ENCODE measurements at regions of chr6 and their contacts with region 1.

Region 1: DNA sequence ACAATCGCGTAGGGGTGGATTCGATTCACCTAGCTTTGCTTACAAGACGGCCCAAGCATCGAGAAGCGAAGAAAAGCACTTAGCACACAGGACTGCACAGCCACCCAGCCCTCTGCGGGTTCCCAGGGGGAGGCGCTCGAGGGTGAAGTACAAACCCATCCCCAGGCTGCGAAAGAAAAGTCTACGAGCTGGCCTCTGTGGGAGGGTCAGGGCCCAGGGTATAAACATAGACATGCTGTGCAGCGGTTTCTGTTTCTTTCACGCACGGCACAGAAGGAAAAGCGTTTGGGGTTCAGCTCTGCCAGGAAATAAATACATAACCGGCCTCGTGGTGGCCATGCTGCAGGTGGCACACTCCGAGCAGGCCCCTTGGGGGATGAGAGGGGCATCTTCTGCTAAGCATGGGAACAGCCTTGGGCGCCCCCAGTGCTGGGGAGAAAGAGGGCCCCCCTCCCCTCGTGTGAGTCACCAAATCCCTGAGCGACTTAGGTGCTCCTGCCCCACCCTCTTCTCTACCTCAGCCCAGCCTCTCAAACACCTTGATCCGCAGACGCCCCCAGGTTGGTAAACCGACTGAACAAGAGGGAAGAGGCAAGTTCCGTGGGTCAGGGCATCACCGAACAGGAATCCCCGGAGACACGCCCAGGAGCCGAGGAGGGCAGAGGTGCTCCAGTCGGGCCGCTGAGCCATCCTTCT is 91.6 kb upstream of the RIPOR2 start:
- DNase-seq: peak; percentile 90
- ATAC-seq: peak; percentile 96
- H3K4me3 Mint-ChIP-seq: peak overlapping the region; percentile 65
- H3K27ac Mint-ChIP-seq: peak overlapping the region; percentile 81
- H3K4me1 Mint-ChIP-seq: peaks cover 45% of the 10 kb centered on the region
- H3K27me3 Mint-ChIP-seq: no peaks in the 10 kb centered on the region
- CTCF ChIP-seq: peak; percentile 42

Region 2: DNA sequence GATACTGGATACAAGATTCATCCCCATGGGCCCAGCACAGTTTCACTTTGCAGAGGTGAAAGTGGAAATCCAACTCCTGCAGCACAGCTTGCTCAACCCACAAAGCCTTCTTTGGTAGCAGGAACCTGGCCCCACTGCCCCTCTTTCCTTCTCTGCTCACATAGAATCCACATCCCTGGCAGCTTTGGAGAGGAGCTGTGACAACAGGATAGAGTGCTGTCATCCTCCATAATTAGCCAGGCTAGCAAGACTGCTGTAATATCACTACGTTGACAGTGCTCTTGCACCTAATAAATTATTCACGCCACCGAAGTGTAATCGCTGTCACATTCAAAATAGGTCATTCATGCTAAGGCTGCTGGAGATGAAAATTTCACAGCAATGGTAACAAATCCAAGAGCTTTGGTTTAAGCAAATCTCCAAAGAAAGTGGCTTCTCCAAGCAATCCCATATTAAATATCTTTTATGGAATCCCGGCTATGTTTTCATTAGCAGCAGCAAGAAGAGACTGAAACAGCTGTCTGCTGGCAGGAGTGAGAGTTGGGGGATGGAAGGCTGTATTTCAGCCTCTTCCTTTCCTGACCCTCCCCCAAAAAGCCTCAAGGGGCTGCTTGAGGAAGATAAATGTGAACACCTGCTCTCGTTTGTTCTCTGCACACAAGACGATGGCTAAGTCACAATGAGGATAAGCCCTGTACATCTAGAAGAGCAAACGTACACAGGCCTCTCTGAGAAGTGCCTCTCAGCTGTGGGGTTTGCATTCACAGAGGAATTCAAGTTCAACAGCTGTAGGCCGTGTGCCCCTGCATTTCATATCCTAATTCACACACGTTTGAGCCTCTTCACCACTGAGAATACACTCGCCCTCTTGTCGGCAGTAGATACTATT is 108.1 kb before region 1 on chr6:
- CTCF ChIA-PET with region 1: interaction called, 19 read pairs
- POLR2A ChIA-PET with region 1: interaction called, 3 read pairs
- intact Hi-C with region 1: no loop called
- DNase-seq: peak; percentile 46
- ATAC-seq: peak; percentile 11
- H3K4me3 Mint-ChIP-seq: peak overlapping the region; percentile 69
- H3K27ac Mint-ChIP-seq: peak overlapping the region; percentile 94
- H3K4me1 Mint-ChIP-seq: peaks cover 82% of the 10 kb centered on the region
- H3K27me3 Mint-ChIP-seq: no peaks in the 10 kb centered on the region
- CTCF ChIP-seq: no peak

Region 3: DNA sequence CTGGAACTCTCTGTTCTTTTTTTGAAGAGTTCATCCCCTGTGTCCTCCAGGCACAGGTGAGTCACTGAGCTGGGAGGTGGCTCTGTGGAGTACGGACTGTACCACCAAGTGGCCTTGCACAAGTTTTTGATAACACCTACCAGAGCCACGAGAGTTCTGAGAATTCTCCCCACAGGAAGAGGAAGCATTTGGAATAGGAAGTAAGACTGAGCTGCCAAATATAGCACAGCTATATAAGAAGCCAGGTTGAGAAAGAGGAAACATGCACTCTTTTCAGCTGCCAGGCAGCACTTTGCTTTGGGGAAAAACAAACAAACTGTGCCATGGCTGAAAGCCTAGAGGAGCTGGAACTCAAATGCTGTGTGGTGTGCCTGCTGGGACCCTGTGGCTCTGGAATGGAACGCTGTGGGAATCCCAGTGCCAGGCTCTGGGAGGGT is 20.8 kb before region 1 on chr6:
- CTCF ChIA-PET with region 1: interaction called, 77 read pairs
- POLR2A ChIA-PET with region 1: no interaction called
- intact Hi-C with region 1: no loop called
- DNase-seq: peak; percentile 75
- ATAC-seq: peak; percentile 72
- H3K4me3 Mint-ChIP-seq: peak overlapping the region; percentile 52
- H3K27ac Mint-ChIP-seq: peak overlapping the region; percentile 94
- H3K4me1 Mint-ChIP-seq: peaks cover 82% of the 10 kb centered on the region
- H3K27me3 Mint-ChIP-seq: no peaks in the 10 kb centered on the region
- CTCF ChIP-seq: no peak

Region 4: DNA sequence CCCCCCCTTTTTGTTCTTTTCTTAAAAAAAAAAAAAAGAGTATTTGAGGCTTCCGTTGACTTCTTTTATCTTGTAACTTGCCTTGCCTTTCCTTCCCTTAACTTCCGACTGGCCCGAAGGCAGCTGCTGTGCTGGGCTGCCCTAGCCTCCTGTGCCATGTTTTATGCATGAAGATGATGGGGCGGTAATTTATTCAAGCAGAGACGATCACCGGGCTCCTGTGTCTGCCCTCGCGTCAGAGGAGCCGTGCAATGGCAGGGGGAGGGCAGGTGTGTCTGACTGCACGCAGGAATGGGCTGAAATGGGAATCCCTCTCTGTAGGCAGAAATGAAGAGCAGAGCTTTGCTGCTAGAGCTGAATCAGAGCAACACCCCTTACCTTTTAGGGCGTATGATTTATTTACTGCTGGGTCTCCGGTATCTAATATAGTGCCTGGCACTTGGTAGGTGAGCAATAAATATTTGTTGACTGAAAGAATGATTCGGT is 14.7 kb after region 1 on chr6:
- CTCF ChIA-PET with region 1: interaction called, 122 read pairs
- POLR2A ChIA-PET with region 1: interaction called, 32 read pairs
- intact Hi-C with region 1: no loop called
- DNase-seq: peak; percentile 64
- ATAC-seq: peak; percentile 64
- H3K4me3 Mint-ChIP-seq: peak overlapping the region; percentile 83
- H3K27ac Mint-ChIP-seq: peak overlapping the region; percentile 92
- H3K4me1 Mint-ChIP-seq: peaks cover 52% of the 10 kb centered on the region
- H3K27me3 Mint-ChIP-seq: no peaks in the 10 kb centered on the region
- CTCF ChIP-seq: no peak

Region 5: DNA sequence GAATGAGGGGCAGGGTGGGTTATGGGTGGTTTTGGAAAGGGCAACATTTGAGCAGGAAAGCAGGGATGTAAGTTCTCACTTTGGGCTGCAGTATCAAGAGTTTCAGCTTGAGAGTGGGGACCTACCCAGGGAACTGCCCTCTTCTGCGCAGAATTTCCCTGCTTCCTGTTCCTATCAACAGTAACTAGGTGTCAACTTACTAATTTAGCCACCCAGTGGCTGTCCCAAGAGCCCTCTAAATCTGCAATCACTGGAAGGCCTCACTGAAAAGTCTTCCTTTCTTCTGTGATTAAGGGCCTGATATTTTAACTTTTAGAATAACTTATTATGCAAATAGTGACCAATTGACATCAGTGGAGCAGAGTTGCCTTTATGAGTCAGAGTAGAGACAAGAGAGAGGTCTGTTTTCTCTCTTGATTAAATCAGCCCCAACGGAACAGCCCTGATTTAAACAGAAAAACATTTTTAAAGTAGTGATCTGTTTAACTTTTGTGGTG is 26.6 kb after region 1 on chr6:
- CTCF ChIA-PET with region 1: interaction called, 26 read pairs
- POLR2A ChIA-PET with region 1: interaction called, 9 read pairs
- intact Hi-C with region 1: no loop called
- DNase-seq: peak; percentile 44
- ATAC-seq: peak; percentile 41
- H3K4me3 Mint-ChIP-seq: no peak overlapping the region
- H3K27ac Mint-ChIP-seq: peak overlapping the region; percentile 66
- H3K4me1 Mint-ChIP-seq: peaks cover 77% of the 10 kb centered on the region
- H3K27me3 Mint-ChIP-seq: no peaks in the 10 kb centered on the region
- CTCF ChIP-seq: no peak

Region 6: DNA sequence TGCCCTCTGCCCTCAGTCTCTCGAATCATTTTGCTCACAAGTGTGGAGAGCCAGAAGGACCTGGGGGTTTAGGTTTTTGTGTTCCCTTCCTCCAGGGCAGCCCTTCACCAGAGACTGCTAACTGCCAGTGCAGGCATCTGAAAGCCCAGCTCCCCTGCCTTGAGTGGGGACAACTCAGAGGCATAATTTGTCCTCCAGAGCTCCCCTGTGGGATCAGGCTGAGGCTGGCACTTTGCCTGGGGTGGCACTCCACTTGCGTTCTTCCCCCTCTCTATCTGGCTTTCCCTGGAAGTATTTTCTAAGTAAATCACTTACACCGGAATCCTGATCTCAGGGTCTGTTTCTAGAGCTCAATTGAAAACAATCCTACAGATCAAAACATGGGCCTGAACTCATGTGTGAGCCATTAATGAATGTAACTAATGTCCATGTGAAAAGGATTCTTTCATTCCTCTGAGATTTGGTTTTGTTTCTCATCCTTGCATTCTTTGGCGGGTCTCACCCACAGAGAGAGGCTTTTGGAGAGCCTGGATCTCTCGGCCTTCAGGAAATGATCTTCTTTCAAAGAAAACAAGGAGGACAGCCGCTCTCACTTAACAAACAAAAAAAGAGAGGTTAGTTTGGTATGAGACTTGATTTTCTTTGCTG is 34.0 kb after region 1 on chr6:
- CTCF ChIA-PET with region 1: interaction called, 26 read pairs
- POLR2A ChIA-PET with region 1: interaction called, 8 read pairs
- intact Hi-C with region 1: no loop called
- DNase-seq: no peak
- ATAC-seq: no peak
- H3K4me3 Mint-ChIP-seq: no peak overlapping the region
- H3K27ac Mint-ChIP-seq: no peak overlapping the region
- H3K4me1 Mint-ChIP-seq: peaks cover 18% of the 10 kb centered on the region
- H3K27me3 Mint-ChIP-seq: no peaks in the 10 kb centered on the region
- CTCF ChIP-seq: no peak

Region 7: GRCh38 chr6:25122001-25122400 is 94.6 kb after region 1 on chr6:
- CTCF ChIA-PET with region 1: no interaction called
- POLR2A ChIA-PET with region 1: no interaction called
- intact Hi-C with region 1: no loop called
- DNase-seq: no peak
- ATAC-seq: no peak
- H3K4me3 Mint-ChIP-seq: no peak overlapping the region
- H3K27ac Mint-ChIP-seq: no peak overlapping the region
- H3K4me1 Mint-ChIP-seq: peaks cover 47% of the 10 kb centered on the region
- H3K27me3 Mint-ChIP-seq: no peaks in the 10 kb centered on the region
- CTCF ChIP-seq: no peak

Region 8: DNA sequence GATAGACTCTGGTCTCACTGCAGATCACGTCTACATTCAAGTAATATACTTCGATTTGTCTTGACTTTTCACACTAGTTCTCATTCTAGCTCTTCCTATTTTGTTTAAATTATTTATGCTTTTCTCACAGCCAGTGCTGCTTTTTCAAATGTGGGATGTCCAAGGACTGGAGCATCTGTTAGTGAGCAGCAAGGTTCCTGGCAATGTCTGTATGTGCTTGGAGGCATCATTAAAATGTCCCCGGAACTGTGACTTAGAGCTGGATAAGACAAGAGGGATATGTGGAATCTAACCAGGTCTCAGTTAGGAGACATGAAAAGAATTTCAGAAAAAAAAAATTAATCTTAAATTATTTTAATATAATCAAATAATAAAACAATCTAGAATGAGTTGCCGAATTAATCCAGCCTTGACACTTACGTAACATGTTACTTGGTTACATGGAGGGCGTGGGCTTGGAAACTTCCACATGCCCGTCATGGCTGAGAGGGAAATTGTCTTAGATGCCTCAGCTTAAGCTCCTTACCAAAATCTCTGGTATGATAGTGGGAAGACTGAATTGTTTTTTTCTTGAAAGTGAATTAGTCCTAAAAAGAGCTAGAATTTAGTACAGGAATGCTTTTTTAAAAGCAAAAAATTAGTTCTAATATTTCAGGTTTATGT is 230.4 kb after region 1 on chr6:
- CTCF ChIA-PET with region 1: no interaction called
- POLR2A ChIA-PET with region 1: no interaction called
- intact Hi-C with region 1: no loop called
- DNase-seq: no peak
- ATAC-seq: no peak
- H3K4me3 Mint-ChIP-seq: no peak overlapping the region
- H3K27ac Mint-ChIP-seq: no peak overlapping the region
- H3K4me1 Mint-ChIP-seq: no peaks in the 10 kb centered on the region
- H3K27me3 Mint-ChIP-seq: peaks cover 4% of the 10 kb centered on the region
- CTCF ChIP-seq: no peak

Measured in activated CD8-positive, alpha-beta T cell treated with anti-CD3 and anti-CD28 coated beads for 36 hours (primary cell).